ENCODE measurements at regions of chr3 and their contacts with region 1.

Region 1: DNA sequence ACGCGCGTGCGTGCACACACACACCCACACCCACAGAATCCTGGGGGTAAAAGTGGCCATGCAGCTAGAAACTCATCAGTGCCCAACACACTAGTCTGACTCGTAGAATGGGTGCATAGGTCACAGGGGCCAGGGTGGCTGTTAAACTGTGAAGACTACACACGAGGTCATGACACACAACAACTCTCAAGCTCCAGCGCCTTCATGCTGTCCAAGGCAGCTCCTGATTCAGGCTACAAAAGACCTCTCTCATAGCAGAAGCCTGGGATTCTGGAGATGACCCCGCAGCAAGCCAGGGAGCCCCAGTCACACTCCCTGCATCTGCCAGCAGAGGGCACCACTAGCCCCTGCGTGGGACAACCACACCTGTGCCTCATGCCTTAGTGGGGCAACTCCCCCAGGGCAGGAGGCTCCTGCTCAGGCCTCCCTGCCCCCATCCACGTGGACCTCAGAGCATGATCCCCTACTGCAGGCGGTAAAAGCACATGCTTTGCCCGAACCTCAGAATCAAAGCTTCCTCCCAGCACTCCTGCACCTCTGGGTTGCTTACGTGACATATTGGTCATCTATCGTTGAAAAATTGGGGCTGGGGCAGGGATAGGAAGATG is 93.1 kb downstream of the LRIG1 start:
- DNase-seq: peak; percentile 68 to 74
- H3K4me3 ChIP-seq: no peak overlapping the region
- H3K27ac ChIP-seq: no peak overlapping the region
- H3K4me1 ChIP-seq: no peaks in the 10 kb centered on the region
- H3K27me3 ChIP-seq: no peaks in the 10 kb centered on the region
- CTCF ChIP-seq: peak; percentile 79 to 93 (median 87)
- POLR2A ChIP-seq: no peak

Region 2: DNA sequence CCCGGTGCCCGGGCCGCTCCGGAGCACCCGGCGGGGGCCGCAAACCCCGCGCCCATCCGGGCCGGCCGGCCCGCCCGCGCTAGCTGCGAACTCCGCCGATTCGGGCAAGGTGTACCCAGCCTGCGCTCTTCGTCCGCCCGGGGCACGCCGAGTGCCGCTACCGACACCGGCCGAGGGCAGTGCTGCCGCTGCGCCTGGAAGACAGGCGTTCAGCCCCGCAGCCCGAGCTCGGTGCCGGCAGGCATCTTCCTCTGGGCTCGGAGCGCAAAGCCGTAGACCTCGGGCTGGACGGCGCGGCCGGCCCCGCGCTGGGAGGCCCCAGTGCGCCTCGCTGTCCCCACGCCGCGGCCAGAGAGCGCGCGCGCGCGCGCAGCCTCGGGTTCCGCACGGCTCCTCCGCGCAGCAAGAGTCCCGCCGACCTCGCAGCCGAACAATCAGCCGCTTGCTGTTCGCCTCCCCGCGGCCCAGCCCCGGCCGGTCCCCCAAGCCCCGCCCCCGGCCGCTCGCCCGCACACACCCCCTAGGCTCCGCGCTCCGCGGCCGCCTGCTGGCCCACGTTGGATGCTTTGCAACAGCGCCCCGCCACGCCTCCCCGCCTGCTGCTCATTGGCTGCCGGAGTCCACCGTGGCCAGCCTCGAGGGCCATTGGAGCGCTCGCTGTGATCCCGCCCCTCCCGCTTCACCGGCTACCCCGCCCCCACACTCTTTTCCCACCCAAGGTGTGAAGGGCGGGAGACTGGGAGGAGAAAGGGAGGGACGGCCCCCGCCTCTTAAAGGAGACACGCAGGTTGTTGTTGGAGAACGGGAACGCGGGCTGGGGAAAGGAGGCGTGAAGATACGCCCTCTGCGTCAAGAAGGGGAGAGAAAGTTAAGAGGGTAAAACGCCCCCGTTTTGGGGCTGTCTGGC is 93.1 kb after region 1 on chr3 and contains the start of gene LRIG1:
- intact Hi-C with region 1: loop called (anchors 10 kb)
- DNase-seq: peak; percentile 99 to 100
- H3K4me3 ChIP-seq: peak within 1 kb of the TSS; percentile 84 to 97
- H3K27ac ChIP-seq: peak within 1 kb of the TSS; percentile 94 to 96
- H3K4me1 ChIP-seq: no peaks in the 10 kb centered on the region
- H3K27me3 ChIP-seq: no peaks in the 10 kb centered on the region
- CTCF ChIP-seq: peak; percentile 2 to 49 (median 18)
- POLR2A ChIP-seq: peak; percentile 77 to 90
- total RNA-seq, gene LRIG1: 20.9 to 108 (median 69.6) TPM